IMR-90 (cell line): ENCODE measurements at regions of chr1 and their contacts with region 1.

Region 1: GRCh38 chr1:44985747-44986359 is 542 bp downstream of the EIF2B3 start:
- DNase-seq: peak; percentile 8
- ATAC-seq: no peak
- H3K4me3 ChIP-seq: peak overlapping the region; percentile 69
- H3K27ac ChIP-seq: peak overlapping the region; percentile 85
- H3K4me1 ChIP-seq: peaks cover 2% of the 10 kb centered on the region; the same call in 1 of the 2 replicates
- H3K27me3 ChIP-seq: no peaks in the 10 kb centered on the region
- CTCF ChIP-seq: no peak
- POLR2A ChIP-seq: no peak
- RAD21 ChIP-seq: no peak

Region 2: DNA sequence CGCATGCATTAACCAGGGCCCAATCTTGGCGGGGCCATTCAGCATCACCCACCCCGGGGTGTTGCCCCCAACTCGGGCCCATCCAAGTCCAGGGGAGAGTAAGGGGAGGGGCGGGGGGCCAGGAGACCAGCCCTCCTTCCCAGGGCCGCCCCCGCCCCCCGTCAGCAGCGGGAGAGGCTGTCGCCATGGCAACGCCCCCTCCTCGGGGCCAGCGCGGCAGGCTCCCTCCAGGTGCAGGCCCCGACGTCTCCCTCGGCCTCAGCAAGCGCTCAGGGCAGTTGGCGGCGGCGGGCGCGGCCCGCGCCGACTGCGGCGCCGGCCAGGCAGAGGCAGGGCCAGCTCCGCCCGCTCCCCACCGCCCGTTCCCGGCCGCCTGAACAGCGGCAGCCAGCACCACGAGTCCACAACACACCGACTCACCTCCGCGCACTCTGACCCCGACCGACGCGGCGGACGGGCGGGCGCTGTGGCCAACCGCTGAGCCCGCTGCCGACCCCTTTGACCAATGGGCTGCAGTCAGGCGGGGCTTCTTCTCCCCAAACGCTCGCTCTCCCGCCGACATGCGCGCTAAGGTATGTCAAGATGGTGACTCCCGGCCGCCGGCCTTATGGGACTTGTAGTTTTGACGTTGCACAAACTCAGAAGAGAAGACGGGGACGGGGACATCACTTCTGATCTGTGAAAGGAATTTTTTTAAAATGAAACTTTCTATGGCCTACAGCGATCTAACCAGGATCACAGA is 630.8 kb before region 1 on chr1 and contains the start of gene ERI3:
- CTCF ChIA-PET with region 1: no interaction called
- POLR2A ChIA-PET with region 1: no interaction called
- dilution Hi-C with region 1: no loop called
- in situ Hi-C with region 1: no loop called
- intact Hi-C with region 1: no loop called
- DNase-seq: peak; percentile 96
- ATAC-seq: peak; percentile 100
- H3K4me3 ChIP-seq: peak within 1 kb of the TSS; percentile 81
- H3K27ac ChIP-seq: peak within 1 kb of the TSS; percentile 41
- H3K4me1 ChIP-seq: peaks cover 3% of the 10 kb centered on the region
- H3K27me3 ChIP-seq: no peaks in the 10 kb centered on the region
- CTCF ChIP-seq: no peak
- POLR2A ChIP-seq: peak; percentile 84
- RAD21 ChIP-seq: no peak
- total RNA-seq, gene ERI3: 55.3 and 56.6 TPM in 2 replicates

Region 3: DNA sequence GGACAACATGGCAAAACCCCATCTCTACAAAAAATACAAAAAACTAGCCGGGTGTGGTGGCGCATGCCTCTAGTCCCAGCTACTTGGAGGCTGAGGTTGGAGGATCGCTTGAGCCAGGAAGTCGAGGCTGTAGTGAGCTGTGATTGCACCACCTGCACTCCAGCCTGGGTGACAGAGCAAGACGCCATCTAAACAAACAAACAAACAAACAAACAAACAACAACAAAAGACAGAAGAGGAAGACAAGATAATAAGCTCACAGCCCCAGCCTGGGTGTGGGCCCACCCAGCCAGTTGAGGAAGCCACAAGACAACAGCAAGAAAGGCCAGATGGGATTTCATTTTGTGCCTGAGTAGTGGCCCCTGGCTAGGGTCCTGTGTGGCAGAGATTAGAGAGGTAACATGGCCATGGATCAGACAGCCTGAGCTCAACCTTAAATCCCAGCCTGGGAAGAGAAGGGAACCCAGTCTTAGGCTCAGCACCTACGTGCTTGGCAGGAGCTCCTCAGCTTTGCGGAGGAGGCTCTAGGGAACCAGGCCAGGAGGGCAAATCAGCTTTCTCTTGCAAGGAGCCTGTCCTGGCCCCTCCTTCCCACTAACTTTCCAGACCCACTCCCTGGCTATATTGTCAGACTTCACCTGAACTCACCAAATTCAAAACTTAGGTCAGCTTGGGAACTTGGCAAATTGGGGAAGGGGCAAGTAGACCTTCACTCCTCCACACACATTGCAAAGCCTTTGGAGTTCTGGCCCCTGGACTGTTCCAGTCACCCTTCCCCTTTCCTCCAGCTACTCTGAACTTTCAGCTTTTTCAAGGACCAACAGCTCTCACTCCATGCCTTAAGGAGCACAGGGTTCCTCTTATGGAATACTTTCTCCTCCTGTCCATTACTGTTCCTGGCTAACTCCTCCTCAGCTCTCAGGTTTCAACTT is 192.8 kb before region 1 on chr1:
- CTCF ChIA-PET with region 1: no interaction called
- POLR2A ChIA-PET with region 1: no interaction called
- dilution Hi-C with region 1: no loop called
- in situ Hi-C with region 1: no loop called
- intact Hi-C with region 1: loop called (anchors 2 kb)
- DNase-seq: no peak
- ATAC-seq: no peak
- H3K4me3 ChIP-seq: no peak overlapping the region
- H3K27ac ChIP-seq: no peak overlapping the region
- H3K4me1 ChIP-seq: no peaks in the 10 kb centered on the region
- H3K27me3 ChIP-seq: peaks cover 2% of the 10 kb centered on the region; the same call in 1 of the 2 replicates
- CTCF ChIP-seq: no peak
- POLR2A ChIP-seq: no peak
- RAD21 ChIP-seq: no peak

Region 4: GRCh38 chr1:44835738-44836675 is 149.8 kb before region 1 on chr1:
- CTCF ChIA-PET with region 1: no interaction called
- POLR2A ChIA-PET with region 1: no interaction called
- dilution Hi-C with region 1: no loop called
- in situ Hi-C with region 1: no loop called
- intact Hi-C with region 1: loop called (anchors 5 kb)
- DNase-seq: peak; percentile 84
- ATAC-seq: peak; percentile 96
- H3K4me3 ChIP-seq: no peak overlapping the region
- H3K27ac ChIP-seq: no peak overlapping the region
- H3K4me1 ChIP-seq: no peaks in the 10 kb centered on the region
- H3K27me3 ChIP-seq: no peaks in the 10 kb centered on the region
- CTCF ChIP-seq: peak; percentile 84
- POLR2A ChIP-seq: no peak
- RAD21 ChIP-seq: peak; percentile 88

Region 5: GRCh38 chr1:44862829-44863401 is 122.9 kb before region 1 on chr1:
- CTCF ChIA-PET with region 1: no interaction called
- POLR2A ChIA-PET with region 1: no interaction called
- dilution Hi-C with region 1: no loop called
- in situ Hi-C with region 1: loop called (anchors 25 kb)
- intact Hi-C with region 1: no loop called
- DNase-seq: peak; percentile 66
- ATAC-seq: peak; percentile 27; the same call in 1 of the 2 replicates
- H3K4me3 ChIP-seq: no peak overlapping the region
- H3K27ac ChIP-seq: no peak overlapping the region
- H3K4me1 ChIP-seq: no peaks in the 10 kb centered on the region
- H3K27me3 ChIP-seq: no peaks in the 10 kb centered on the region
- CTCF ChIP-seq: no peak
- POLR2A ChIP-seq: no peak
- RAD21 ChIP-seq: no peak

Region 6: DNA sequence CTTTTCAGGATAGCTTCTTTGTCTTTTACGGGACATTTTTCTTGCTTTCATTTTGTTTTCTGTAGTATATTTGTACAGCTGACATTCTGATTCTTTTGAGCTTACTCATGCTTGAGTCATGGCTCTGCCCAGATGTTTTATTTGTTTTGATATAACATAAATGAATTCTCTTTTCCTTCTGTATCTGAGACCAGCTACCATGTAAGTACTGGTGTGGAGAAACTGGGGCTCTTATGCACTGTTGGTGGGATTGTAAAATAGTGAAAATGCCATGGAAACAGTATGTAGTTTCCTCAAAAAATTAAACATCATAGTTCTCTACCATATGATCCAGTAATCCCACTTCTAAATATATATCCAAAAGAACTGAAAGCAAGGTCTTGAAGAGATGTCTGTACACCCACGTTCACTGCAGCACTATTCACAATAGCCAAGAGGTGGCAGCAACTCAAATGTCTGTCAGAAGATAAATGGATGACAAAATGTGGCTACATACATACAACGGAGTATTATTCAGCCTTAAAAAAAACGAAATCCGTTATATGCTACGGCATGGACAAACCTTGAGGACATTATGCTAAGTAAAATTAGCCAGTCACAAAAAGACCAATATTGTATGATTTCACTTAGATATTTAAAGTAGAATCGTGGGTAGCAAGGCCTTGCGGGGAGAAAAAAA is 60.9 kb before region 1 on chr1:
- CTCF ChIA-PET with region 1: no interaction called
- POLR2A ChIA-PET with region 1: no interaction called
- dilution Hi-C with region 1: no loop called
- in situ Hi-C with region 1: no loop called
- intact Hi-C with region 1: loop called (anchors 2 kb)
- DNase-seq: peak; percentile 95
- ATAC-seq: peak; percentile 84
- H3K4me3 ChIP-seq: peak overlapping the region; percentile 7; the same call in 1 of the 2 replicates
- H3K27ac ChIP-seq: peak overlapping the region; percentile 79; the same call in 1 of the 2 replicates
- H3K4me1 ChIP-seq: peaks cover 12% of the 10 kb centered on the region
- H3K27me3 ChIP-seq: no peaks in the 10 kb centered on the region
- CTCF ChIP-seq: peak; percentile 57
- POLR2A ChIP-seq: no peak
- RAD21 ChIP-seq: peak; percentile 29; the same call in 1 of the 2 replicates

Region 7: DNA sequence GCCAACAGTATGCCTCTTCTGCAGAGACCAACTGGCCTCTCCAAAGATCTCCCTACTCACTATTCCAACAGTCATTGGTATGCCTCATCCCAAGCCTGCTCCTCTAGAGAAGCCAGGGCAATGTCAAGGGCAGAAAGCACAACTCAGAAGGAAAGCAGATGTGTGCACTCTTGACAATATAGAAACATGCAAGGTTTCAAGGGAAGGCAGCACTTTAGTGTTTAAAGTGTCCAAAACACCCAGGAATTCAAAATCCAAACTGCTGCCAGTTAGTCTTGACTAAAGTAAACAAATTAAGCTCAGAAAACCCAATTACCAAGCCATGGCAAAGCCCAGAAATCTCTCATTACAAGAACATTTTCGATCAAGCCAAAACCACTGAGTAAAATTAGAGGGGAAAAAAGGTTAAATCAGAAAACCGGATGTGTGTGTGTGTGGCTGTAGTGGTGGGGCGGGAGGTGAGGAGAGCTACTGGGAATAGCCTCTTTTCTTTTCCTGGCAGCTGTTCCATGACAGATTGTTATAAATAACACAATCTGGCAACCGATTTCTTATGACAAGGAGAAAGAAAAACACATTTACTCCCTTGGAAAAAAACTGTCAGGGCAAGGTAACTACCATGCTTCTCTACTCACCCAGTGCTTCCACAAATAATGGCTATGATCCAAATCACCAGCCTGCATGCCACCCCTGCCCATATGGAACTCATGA is 38.6 kb before region 1 on chr1:
- CTCF ChIA-PET with region 1: no interaction called
- POLR2A ChIA-PET with region 1: no interaction called
- dilution Hi-C with region 1: no loop called
- in situ Hi-C with region 1: no loop called
- intact Hi-C with region 1: loop called (anchors 5 kb)
- DNase-seq: peak; percentile 69
- ATAC-seq: peak; percentile 88
- H3K4me3 ChIP-seq: no peak overlapping the region
- H3K27ac ChIP-seq: peak overlapping the region; percentile 13; the same call in 1 of the 2 replicates
- H3K4me1 ChIP-seq: peaks cover 16% of the 10 kb centered on the region
- H3K27me3 ChIP-seq: no peaks in the 10 kb centered on the region
- CTCF ChIP-seq: no peak
- POLR2A ChIP-seq: no peak
- RAD21 ChIP-seq: no peak